ENCODE measurements at regions of chr5 and their contacts with region 1.

Region 1: DNA sequence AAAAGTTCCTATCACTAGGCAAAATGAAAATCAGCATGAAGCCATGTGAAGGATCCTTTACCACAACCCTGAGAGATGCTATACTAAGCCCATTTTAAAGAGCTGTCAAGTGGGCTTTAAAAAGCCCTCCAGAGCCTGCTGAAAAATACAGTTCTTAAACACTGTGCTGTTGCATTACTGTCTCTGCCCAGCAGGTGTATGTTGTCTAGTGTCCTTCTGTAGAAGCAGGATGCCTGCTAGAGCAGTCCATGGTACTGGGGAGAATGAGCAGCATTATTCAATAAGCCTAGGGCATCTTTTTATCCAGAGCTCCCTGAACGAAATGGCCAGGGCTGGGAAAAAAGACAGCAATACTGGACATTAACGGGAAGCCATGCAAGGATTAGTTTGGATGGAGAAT is 126.2 kb upstream of the PLCXD3 start:
- DNase-seq: no peak
- H3K4me3 ChIP-seq: no peak overlapping the region
- H3K27ac ChIP-seq: no peak overlapping the region
- H3K4me1 ChIP-seq: no peaks in the 10 kb centered on the region
- H3K27me3 ChIP-seq: no peaks in the 10 kb centered on the region
- CTCF ChIP-seq: no peak

Region 2: DNA sequence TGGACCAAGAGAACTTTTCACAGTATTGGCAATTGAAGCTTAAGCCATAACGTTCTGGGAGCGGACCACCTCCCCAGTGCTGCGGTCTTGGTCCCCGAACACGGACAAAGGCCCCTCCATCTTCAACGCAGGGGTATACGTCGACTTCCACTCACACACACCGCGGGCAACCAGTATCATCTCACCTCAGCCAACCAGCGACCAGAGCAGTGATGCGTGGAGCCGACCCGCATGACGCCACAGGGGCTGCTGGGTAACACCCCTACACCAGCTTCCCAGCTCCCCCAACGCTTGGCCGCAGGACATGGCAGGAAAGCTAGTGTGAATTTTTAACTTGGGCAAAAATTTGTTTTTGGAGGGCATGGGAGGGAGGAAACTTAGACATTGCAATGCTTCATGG is 48.9 kb before region 1 on chr5:
- intact Hi-C with region 1: no loop called
- DNase-seq: no peak
- H3K4me3 ChIP-seq: no peak overlapping the region
- H3K27ac ChIP-seq: no peak overlapping the region
- H3K4me1 ChIP-seq: no peaks in the 10 kb centered on the region
- H3K27me3 ChIP-seq: no peaks in the 10 kb centered on the region
- CTCF ChIP-seq: no peak

Region 3: GRCh38 chr5:41835645-41836044 is 199.0 kb after region 1 on chr5:
- intact Hi-C with region 1: loop called (anchors 10 kb)
- DNase-seq: peak; percentile 50 to 74
- H3K4me3 ChIP-seq: no peak overlapping the region
- H3K27ac ChIP-seq: peak overlapping the region; percentile 24 to 62
- H3K4me1 ChIP-seq: peaks cover 4 to 17% of the 10 kb centered on the region in 2 donors
- H3K27me3 ChIP-seq: no peaks in the 10 kb centered on the region
- CTCF ChIP-seq: no peak